Right lobe of liver (tissue), 6 donors: ENCODE measurements at regions of chr15 and their contacts with region 1.

Region 1: GRCh38 chr15:34708422-34708821 is 46.4 kb downstream of the GJD2 start:
- DNase-seq: no peak
- ATAC-seq: peak; percentile 74 to 86 (median 78)
- H3K4me3 ChIP-seq: no peak overlapping the region
- H3K27ac ChIP-seq: no peak overlapping the region
- H3K4me1 ChIP-seq: no peaks in the 10 kb centered on the region
- H3K27me3 ChIP-seq: no peaks in the 10 kb centered on the region
- CTCF ChIP-seq: peak; percentile 59 to 79 (median 72)
- POLR2A ChIP-seq: no peak

Region 2: DNA sequence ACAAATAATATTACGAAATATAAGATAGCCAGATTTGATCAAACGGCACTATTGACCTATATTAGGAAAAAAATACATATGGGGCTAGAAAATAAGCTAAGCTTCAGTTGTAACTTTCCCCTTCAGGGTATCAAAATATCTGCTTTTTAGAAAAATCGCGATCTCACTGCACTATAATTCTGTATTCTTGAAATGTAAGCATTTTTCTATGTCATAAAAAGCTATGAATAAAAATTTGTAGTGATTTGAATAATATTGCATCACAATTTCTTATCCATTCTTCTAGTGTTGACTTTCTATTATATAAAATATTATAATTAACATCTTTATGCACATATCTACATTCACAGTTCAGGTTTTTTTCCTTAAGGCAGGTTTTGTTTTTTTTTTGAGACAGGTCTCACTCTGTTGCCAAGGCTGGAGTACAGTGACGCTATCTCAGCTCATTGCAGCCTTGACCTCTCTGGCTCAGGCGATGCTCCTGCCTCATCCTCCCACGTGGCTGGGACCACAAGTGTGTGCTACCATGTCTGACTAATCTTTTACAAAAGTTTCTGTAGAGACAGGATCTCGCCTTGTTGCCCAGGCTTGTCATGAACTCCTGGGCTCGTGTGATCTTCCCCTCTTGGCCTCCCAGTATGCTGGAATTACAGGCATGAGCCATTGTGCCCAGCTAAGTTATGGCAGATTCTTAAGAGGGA is 462.0 kb before region 1 on chr15:
- intact Hi-C with region 1: no loop called
- DNase-seq: no peak
- ATAC-seq: no peak
- H3K4me3 ChIP-seq: no peak overlapping the region
- H3K27ac ChIP-seq: no peak overlapping the region
- H3K4me1 ChIP-seq: no peaks in the 10 kb centered on the region
- H3K27me3 ChIP-seq: no peaks in the 10 kb centered on the region
- CTCF ChIP-seq: no peak
- POLR2A ChIP-seq: no peak

Region 3: GRCh38 chr15:34490417-34491193 is 217.8 kb before region 1 on chr15:
- intact Hi-C with region 1: no loop called
- DNase-seq: no peak
- ATAC-seq: no peak
- H3K4me3 ChIP-seq: no peak overlapping the region
- H3K27ac ChIP-seq: no peak overlapping the region
- H3K4me1 ChIP-seq: no peaks in the 10 kb centered on the region
- H3K27me3 ChIP-seq: no peaks in the 10 kb centered on the region
- CTCF ChIP-seq: no peak
- POLR2A ChIP-seq: no peak

Region 4: DNA sequence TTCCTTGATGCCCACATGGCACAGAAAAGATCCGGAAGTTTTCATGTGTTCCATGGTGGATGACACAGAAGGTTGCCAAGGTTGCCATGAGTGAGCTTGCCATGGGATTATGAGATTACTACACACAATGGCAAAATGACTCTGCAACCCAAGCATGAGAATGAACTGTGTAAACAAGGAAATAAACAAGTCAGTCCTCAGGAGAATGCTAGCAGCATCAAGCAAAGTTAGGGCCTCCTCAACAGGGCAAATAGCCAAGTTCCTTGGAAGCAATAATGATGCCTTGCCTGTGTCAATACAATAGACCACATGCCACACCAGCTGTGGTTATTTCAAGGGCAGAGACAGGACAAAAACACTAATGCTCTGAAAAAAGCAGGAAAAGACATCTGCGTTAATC is 219.3 kb after region 1 on chr15:
- intact Hi-C with region 1: loop called (anchors 5 to 10 kb)
- DNase-seq: no peak
- ATAC-seq: no peak
- H3K4me3 ChIP-seq: no peak overlapping the region
- H3K27ac ChIP-seq: no peak overlapping the region
- H3K4me1 ChIP-seq: no peaks in the 10 kb centered on the region
- H3K27me3 ChIP-seq: no peaks in the 10 kb centered on the region
- CTCF ChIP-seq: no peak
- POLR2A ChIP-seq: no peak

Region 5: DNA sequence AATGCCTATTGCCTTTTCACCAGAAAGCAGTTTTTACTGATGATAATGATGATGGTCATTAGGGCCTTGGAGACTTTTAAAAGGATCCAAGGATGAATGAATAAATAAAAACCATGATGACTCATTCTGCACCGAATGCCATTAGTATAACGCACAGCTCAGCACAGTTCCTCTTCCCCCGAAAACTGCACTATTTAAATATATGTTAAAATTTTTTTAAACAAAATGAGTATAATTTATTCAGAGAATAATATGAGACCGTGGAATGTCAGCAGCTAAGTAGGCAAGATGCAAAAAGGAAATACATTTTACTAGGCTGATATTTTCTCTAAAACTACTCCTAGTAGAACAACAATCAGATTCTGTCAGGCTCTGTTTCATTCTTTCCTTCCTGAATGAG is 460.0 kb after region 1 on chr15:
- intact Hi-C with region 1: no loop called
- DNase-seq: no peak
- ATAC-seq: no peak
- H3K4me3 ChIP-seq: no peak overlapping the region
- H3K27ac ChIP-seq: no peak overlapping the region
- H3K4me1 ChIP-seq: no peaks in the 10 kb centered on the region
- H3K27me3 ChIP-seq: no peaks in the 10 kb centered on the region
- CTCF ChIP-seq: no peak
- POLR2A ChIP-seq: no peak